Keratinocyte (primary cell): ENCODE measurements at regions of chr11 and their contacts with region 1.

Region 1: GRCh38 chr11:36376888-36377758 is 81.0 kb downstream of the PRR5L start:
- DNase-seq: no peak
- H3K4me3 ChIP-seq: peak overlapping the region; percentile 89 to 93 (median 90)
- H3K27ac ChIP-seq: peak overlapping the region; percentile 47
- H3K4me1 ChIP-seq: peaks cover 8% of the 10 kb centered on the region
- H3K27me3 ChIP-seq: no peaks in the 10 kb centered on the region
- CTCF ChIP-seq: peak; percentile 48 to 82 (median 68)

Region 2: DNA sequence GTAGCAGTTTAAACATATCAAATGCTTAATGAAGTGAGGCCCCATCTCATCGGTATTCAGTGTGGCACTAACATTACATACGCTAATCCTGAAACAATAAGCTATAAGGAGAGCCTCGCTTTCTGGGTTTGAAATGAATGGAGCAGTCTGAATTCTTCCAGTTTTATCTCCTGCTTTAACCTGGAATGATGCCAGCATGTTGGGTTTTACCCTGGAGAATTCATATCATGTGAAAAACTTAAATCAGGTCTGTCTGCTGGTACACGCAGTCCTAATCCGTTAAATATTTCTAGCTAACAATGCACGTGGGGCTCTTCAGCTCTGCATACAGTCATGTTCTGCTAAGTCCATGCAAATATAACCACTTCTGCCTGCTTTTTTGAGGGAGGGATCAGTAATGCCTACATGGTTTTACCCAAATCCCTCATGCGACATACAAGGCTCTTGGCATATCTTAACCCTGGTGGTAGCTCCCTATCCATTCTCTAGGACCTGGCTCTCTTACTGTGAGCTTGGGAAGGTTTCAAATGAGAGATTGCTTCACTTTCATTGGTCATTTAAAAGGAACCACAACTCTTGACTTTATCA is 180.6 kb before region 1 on chr11:
- dilution Hi-C with region 1: no loop called
- DNase-seq: no peak
- H3K4me3 ChIP-seq: no peak overlapping the region
- H3K27ac ChIP-seq: no peak overlapping the region
- H3K4me1 ChIP-seq: no peaks in the 10 kb centered on the region
- H3K27me3 ChIP-seq: no peaks in the 10 kb centered on the region
- CTCF ChIP-seq: no peak

Region 3: DNA sequence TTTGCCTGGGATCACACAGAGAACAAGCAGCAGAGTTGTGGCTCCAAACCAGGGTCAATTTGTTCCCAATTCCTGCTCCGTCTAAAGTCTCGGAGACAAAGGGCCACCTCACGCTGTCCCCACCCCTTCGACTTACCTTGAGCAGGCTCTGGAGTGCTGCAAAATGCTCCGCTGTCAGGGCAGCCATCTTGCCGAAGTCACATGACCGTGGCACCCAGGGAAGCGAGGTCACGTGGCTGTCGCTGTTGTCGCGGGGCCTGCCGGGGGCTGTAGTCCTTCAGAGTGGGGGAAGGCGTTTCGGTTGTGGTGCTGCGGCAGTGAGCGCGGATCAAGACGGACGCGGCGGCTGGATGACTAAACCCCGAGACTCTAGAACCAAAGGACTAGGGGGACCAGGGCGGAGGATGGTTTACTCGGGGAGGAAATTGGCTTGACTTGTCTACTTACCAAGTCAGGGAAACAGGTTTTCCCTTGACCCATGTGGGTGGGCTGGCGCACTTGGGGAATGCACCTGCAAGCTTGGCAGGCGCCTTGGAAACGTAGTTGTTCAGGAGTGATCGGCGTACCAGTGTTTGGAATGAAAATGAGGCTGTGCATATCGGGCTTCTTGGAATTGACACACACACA is 87.8 kb before region 1 on chr11 and contains the start of gene COMMD9:
- dilution Hi-C with region 1: loop called (anchors 25 kb)
- DNase-seq: peak; percentile 57
- H3K4me3 ChIP-seq: peak within 1 kb of the TSS; percentile 63 to 93 (median 85)
- H3K27ac ChIP-seq: peak within 1 kb of the TSS; percentile 52
- H3K4me1 ChIP-seq: peaks cover 4% of the 10 kb centered on the region
- H3K27me3 ChIP-seq: no peaks in the 10 kb centered on the region
- CTCF ChIP-seq: no peak
- polyA plus RNA-seq, gene COMMD9: 51.2 to 68.5 TPM (median 52.6 TPM) in 3 replicates